Tibial artery (tissue), 4 donors: ENCODE measurements at regions of chr1 and their contacts with region 1.

Region 1: DNA sequence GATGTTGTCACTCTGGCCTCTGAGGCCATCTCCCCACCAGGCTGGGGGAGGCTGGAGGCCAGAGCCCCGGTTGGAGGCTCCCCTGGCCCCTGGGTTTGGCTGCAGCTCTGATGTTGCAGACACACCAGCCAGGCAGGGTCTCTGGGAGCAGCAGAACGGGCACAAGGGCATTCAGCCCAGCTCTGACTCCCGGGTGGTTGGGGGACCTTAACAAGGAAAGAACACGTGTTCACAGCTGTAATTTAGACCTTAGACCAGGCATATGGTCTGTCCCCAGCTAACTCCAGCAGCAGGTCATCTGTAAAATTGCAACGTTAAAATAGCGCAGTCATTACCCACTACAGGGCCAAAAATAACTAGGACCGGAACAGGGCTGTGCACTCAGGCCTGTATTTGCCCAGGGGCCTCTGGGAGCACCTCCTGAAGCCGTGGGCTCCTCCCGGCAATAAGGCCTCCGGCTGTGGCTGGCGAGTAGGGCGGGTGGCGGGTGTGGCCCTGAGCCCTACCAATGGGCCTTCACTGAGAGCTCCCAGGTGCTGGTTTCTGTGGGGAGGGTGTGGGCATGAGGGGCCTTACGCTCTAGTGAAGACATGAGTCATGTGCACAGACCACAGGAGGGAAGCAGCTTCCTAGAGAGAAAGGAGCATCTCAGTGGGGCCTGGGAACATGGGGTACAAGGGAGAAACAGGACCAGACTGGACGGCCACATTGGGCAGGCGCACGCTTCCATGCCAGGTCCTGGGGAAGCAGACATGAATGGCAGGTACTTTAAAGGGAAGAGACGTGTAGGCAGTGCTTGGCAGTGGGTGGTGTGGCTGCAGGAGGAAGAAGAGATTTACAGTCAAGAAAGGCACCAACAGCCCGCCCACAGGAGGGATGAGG is 6.1 kb downstream of the LDLRAP1 start:
- DNase-seq: peak in 1 of 2 donors; percentile 88
- H3K4me3 ChIP-seq: peak overlapping the region in 1 of 2 donors; percentile 12
- H3K27ac ChIP-seq: peak overlapping the region; percentile 75 to 79
- H3K4me1 ChIP-seq: peaks cover 0 to 96% (median 51%) of the 10 kb centered on the region in 4 donors
- H3K27me3 ChIP-seq: no peaks in the 10 kb centered on the region
- CTCF ChIP-seq: no peak

Region 2: GRCh38 chr1:24957016-24957807 is 592.3 kb before region 1 on chr1:
- intact Hi-C with region 1: no loop called
- DNase-seq: no peak
- H3K4me3 ChIP-seq: no peak overlapping the region
- H3K27ac ChIP-seq: no peak overlapping the region
- H3K4me1 ChIP-seq: no peaks in the 10 kb centered on the region
- H3K27me3 ChIP-seq: peaks cover 0 to 45% of the 10 kb centered on the region in 2 donors
- CTCF ChIP-seq: no peak

Region 3: GRCh38 chr1:24970399-24970753 is 579.1 kb before region 1 on chr1:
- intact Hi-C with region 1: no loop called
- DNase-seq: no peak
- H3K4me3 ChIP-seq: no peak overlapping the region
- H3K27ac ChIP-seq: no peak overlapping the region
- H3K4me1 ChIP-seq: no peaks in the 10 kb centered on the region
- H3K27me3 ChIP-seq: peaks cover 0 to 46% of the 10 kb centered on the region in 2 donors
- CTCF ChIP-seq: no peak

Region 4: DNA sequence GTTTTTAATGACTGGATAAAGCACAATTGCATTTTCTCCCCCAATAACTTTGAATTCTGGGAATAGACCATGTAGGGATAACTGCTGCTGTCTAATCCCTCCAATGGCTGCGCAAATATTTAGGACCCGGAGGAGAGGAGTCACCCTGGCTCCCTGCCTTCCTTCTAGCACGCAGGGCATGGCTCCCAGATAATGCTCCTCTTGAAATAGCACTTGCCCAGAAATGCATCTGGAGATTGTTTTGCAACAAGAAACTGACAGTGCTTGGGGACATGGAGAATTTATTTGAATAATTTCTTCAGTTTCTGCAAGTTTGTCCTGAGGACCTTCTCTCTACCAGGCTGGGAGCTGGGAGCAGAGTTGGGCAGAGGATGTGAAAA is 150.6 kb after region 1 on chr1:
- intact Hi-C with region 1: no loop called
- DNase-seq: peak; percentile 80 to 87
- H3K4me3 ChIP-seq: no peak overlapping the region
- H3K27ac ChIP-seq: peak overlapping the region; percentile 78 to 80
- H3K4me1 ChIP-seq: peaks cover 13 to 90% (median 59%) of the 10 kb centered on the region in 4 donors
- H3K27me3 ChIP-seq: no peaks in the 10 kb centered on the region
- CTCF ChIP-seq: no peak

Region 5: DNA sequence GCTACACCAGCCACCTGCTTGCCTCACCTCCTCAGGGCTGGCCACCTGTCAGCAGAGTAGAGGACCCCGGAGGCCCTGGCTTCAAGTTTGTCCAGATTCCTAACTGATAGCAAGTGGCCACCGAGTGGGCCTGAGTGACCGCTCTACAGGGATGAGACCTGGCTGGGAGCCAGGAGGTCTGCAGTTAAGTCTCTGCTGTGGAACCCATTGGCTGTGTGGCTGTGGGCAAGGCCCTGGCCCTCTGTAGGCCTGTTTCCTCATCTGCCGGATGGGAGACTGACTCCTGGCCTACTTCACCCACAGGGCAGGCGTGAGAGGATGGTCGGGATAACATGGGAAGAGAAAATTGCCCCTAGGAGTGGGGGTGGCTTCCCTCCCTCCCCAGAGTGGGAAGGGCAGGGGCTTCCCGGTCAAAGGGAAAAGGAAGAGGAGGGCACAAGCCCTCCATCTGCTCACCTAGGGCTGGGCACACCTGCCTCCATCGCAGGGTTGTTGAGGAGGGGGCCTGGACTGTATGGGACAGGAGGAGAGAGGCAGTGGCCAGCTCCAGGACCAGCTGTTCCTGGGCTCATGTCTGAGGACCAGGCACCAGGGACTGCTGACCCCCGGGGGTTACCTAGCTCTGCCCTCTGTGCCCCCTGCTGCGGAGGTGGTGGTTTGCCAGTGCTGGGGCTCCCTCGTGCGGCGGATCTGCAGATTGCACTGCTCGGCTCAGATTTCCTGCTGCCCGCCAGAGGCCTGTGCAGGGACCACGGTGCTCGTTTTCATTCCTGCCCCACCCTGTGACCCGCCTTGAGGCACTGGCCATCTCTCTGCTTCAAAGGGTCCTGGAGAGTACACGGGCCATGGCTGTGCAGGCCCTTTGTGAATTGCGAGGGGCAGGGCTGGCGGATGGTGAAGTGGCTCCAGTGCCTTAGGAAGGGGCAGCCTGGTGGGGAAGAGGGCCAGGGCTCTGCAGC is 261.1 kb after region 1 on chr1:
- intact Hi-C with region 1: loop called (anchors 5 kb)
- DNase-seq: peak in 1 of 2 donors; percentile 65
- H3K4me3 ChIP-seq: no peak overlapping the region
- H3K27ac ChIP-seq: no peak overlapping the region
- H3K4me1 ChIP-seq: peaks cover 0 to 47% (median 29%) of the 10 kb centered on the region in 4 donors
- H3K27me3 ChIP-seq: no peaks in the 10 kb centered on the region
- CTCF ChIP-seq: peak; percentile 93